K562 (cell line): ENCODE measurements at regions of chr3 and their contacts with region 1.

Region 1: DNA sequence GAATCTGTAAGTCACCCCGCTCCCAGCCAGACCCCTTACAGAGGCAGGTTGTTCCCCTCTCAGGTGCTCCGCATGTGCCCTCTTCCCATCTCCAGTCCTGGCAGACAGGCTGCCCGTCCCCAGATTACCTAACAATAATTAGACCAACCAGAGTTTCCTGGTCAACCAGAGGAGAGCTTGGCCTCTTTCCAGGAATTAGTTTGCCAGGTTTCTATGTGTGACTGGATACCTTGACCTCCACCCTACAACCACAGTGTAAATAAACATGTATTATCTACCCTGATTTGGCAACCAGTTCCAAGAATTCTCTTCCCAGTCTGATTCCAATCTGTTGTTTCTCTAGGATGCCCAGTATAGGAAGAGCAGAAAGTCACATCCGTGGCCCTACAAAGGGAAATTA is 178.0 kb upstream of the UMPS start:
- DNase-seq: no peak
- ATAC-seq: no peak
- H3K4me3 ChIP-seq: no peak overlapping the region
- H3K27ac ChIP-seq: no peak overlapping the region
- H3K4me1 ChIP-seq: no peaks in the 10 kb centered on the region
- H3K27me3 ChIP-seq: peaks cover 9 to 13% of the 10 kb centered on the region in 2 experiments; a peak in 4 of 5 replicates
- CTCF ChIP-seq: no peak
- EP300 ChIP-seq: no peak
- POLR2A ChIP-seq: no peak
- RAD21 ChIP-seq: no peak

Region 2: GRCh38 chr3:124351430-124352148 is 200.7 kb before region 1 on chr3:
- CTCF ChIA-PET with region 1: interaction called, 8 read pairs
- POLR2A ChIA-PET with region 1: no interaction called
- in situ Hi-C with region 1: no loop called
- intact Hi-C with region 1: loop called (anchors 1 kb)
- DNase-seq: peak; percentile 13 to 32 (median 22)
- ATAC-seq: peak; percentile 62; the same call in 1 of the 3 replicates
- H3K4me3 ChIP-seq: no peak overlapping the region
- H3K27ac ChIP-seq: no peak overlapping the region
- H3K4me1 ChIP-seq: no peaks in the 10 kb centered on the region
- H3K27me3 ChIP-seq: no peaks in the 10 kb centered on the region
- CTCF ChIP-seq: peak; percentile 15 to 62 (median 48); a peak in 3 of 6 replicates
- EP300 ChIP-seq: no peak
- POLR2A ChIP-seq: no peak
- RAD21 ChIP-seq: peak; percentile 49 to 65

Region 3: DNA sequence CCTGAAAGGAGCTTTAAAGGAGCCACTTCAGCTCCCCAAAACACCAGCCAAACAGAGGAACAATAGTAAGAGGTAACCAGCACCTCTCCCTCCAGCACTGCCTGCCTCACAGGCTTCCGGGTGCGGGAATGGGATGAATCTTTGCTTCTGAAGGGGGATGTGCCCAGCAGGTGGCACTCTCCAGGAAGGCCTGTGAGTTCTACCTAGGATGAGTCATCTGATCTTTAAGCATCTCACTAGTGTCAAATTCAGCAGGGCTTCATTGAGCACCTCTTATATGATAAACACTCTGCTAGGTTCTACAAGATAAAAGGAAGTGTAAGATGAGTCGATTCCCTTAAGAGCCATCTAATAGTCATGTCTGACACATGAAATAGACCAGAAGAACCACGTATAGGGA is 59.4 kb before region 1 on chr3:
- CTCF ChIA-PET with region 1: interaction called, 3 read pairs
- POLR2A ChIA-PET with region 1: interaction called, 4 read pairs
- in situ Hi-C with region 1: no loop called
- intact Hi-C with region 1: loop called (anchors 5 kb)
- DNase-seq: peak; percentile 43 to 53 (median 46)
- ATAC-seq: peak; percentile 76
- H3K4me3 ChIP-seq: no peak overlapping the region
- H3K27ac ChIP-seq: no peak overlapping the region
- H3K4me1 ChIP-seq: no peaks in the 10 kb centered on the region
- H3K27me3 ChIP-seq: no peaks in the 10 kb centered on the region
- CTCF ChIP-seq: peak; percentile 36 to 51 (median 49); a peak in 4 of 6 replicates
- EP300 ChIP-seq: no peak
- POLR2A ChIP-seq: no peak
- RAD21 ChIP-seq: peak in 1 of 2 experiments; percentile 26; a peak in 1 of 4 replicates